ENCODE measurements at regions of chr13 and their contacts with region 1.

Region 1: GRCh38 chr13:33069365-33069764 is 53.1 kb downstream of the KL start:
- DNase-seq: no peak
- H3K4me3 ChIP-seq: no peak overlapping the region
- H3K27ac ChIP-seq: no peak overlapping the region
- H3K4me1 ChIP-seq: no peaks in the 10 kb centered on the region
- H3K27me3 ChIP-seq: no peaks in the 10 kb centered on the region
- CTCF ChIP-seq: no peak
- EP300 ChIP-seq: no peak
- POLR2A ChIP-seq: no peak

Region 2: DNA sequence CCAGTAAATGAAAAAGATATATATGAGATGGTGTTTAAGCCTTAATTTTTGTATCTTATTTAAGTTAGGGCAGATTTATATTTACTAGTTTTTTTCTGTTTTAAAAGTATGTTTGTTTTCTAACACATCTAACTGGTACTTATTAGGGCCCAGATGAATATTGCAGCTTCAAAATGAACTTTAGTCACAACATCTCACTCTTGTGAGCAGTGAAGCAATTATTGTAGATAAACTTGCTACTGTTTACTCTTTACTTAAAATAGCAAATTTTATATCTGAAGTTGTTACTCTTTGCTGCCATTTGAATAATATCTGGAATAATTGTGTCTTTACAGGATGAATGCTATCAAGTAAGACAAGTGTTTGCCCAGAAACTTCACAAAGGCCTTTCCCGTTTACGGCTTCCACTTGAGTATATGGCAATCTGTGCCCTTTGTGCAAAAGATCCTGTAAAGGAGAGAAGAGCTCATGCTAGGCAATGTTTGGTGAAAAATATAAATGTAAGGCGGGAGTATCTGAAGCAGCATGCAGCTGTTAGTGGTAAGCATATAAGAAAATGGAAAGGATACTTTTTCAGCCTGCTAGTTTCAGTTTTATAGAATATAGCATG is 316.3 kb before region 1 on chr13:
- in situ Hi-C with region 1: no loop called
- intact Hi-C with region 1: no loop called
- DNase-seq: no peak
- H3K4me3 ChIP-seq: no peak overlapping the region
- H3K27ac ChIP-seq: no peak overlapping the region
- H3K4me1 ChIP-seq: peaks cover 0 to 3% (median 0%) of the 10 kb centered on the region in 4 donors
- H3K27me3 ChIP-seq: no peaks in the 10 kb centered on the region
- CTCF ChIP-seq: no peak
- EP300 ChIP-seq: no peak
- POLR2A ChIP-seq: no peak

Region 3: DNA sequence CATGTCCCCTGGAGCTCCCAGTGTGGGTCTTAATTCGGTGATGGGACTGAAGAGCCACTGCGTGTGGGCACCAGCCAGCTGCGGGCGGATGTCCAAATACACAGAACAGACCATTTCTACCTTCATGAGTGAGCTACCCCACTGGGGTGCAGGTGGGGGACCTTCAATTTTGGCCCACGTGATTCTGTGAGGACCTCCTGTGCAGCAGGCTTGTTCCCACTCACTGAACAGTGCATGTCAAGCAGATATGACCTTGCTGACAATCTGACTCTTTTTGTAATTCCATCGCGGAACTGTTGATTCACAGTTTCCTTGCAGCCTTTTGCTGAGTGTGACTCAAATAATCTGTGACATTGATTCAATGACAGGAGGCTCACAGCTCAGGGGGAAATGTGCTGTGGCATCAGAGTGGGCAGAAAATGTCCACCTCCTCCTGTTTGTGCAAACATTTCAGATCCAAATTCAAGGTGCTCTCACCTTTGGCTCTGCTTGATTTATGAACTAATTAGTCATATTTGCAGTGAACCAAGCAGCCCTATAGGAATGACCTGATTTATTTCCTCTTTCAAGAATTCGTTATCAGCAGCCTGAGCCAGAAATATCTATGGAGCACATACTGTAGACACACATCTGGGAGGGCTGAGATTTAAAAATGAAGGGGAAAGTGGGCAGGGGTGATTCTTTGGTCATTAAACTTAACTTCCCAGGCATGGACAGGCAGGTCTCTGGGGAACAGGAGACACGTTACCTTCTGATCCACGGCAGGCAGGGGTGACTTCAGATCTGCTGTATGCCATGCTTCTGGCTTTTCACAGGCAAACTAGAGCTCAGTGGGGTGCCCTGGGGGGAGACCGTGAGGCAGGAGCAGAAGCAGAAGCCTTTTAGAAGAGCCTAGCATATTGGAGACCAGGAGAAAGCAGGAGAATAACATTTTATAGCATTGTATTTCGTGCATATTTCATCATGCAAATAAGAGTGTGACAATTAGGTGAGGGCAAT is 223.1 kb before region 1 on chr13:
- in situ Hi-C with region 1: no loop called
- intact Hi-C with region 1: loop called (anchors 5 kb)
- DNase-seq: no peak
- H3K4me3 ChIP-seq: no peak overlapping the region
- H3K27ac ChIP-seq: no peak overlapping the region
- H3K4me1 ChIP-seq: peaks cover 0 to 7% (median 0%) of the 10 kb centered on the region in 4 donors
- H3K27me3 ChIP-seq: no peaks in the 10 kb centered on the region
- CTCF ChIP-seq: no peak
- EP300 ChIP-seq: no peak
- POLR2A ChIP-seq: no peak

Region 4: DNA sequence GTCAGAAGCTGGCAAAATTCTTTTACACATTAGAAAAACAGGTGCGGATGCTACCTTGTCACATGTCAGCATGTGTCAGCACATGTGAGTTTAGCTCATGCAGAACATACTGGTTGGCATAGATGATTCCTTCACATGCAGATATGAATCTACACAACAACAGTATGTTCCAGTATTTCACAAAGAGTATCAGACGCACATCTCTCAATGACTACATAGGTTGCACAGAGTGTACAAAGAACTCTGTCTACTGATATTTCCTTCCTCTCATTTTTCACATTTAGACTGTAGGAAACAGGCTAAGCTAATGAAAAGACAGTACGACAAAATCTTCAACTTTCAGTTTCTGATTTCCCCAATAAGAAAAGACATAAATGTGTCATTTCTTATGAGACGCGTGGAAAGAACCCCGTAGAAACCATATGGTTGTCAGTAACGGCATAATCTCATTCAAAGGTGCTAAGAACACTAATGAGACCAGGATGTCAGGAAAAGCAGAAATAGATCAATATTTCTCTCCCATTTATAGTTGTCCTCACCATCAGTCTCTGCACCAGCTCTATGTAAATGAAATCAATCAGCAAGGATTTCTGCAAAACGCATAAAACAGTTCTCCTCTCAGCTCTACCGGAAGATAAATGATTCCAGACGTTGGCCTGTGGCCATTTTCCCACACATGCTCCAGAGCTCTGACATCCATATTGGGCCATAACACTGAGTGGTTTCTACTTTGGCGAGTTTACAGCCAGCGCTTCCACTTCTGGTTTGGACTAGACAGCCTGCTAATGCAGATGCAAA is 135.0 kb after region 1 on chr13:
- in situ Hi-C with region 1: no loop called
- intact Hi-C with region 1: no loop called
- DNase-seq: peak; percentile 59
- H3K4me3 ChIP-seq: peak overlapping the region; percentile 9 to 33 (median 18)
- H3K27ac ChIP-seq: peak overlapping the region; percentile 71 to 84 (median 79)
- H3K4me1 ChIP-seq: peaks cover 11 to 53% (median 24%) of the 10 kb centered on the region in 4 donors
- H3K27me3 ChIP-seq: no peaks in the 10 kb centered on the region
- CTCF ChIP-seq: no peak
- EP300 ChIP-seq: peak; percentile 43
- POLR2A ChIP-seq: no peak